Calu3 (cell line): ENCODE measurements at regions of chr12 and their contacts with region 1.

Region 1: GRCh38 chr12:104951759-104952509 is 6.2 kb downstream of the SLC41A2 start:
- DNase-seq: no peak
- H3K4me3 Mint-ChIP-seq: peak overlapping the region; percentile 55
- H3K27ac Mint-ChIP-seq: peak overlapping the region; percentile 82
- H3K4me1 Mint-ChIP-seq: peaks cover 48% of the 10 kb centered on the region
- H3K27me3 Mint-ChIP-seq: no peaks in the 10 kb centered on the region
- CTCF ChIP-seq: no peak

Region 2: DNA sequence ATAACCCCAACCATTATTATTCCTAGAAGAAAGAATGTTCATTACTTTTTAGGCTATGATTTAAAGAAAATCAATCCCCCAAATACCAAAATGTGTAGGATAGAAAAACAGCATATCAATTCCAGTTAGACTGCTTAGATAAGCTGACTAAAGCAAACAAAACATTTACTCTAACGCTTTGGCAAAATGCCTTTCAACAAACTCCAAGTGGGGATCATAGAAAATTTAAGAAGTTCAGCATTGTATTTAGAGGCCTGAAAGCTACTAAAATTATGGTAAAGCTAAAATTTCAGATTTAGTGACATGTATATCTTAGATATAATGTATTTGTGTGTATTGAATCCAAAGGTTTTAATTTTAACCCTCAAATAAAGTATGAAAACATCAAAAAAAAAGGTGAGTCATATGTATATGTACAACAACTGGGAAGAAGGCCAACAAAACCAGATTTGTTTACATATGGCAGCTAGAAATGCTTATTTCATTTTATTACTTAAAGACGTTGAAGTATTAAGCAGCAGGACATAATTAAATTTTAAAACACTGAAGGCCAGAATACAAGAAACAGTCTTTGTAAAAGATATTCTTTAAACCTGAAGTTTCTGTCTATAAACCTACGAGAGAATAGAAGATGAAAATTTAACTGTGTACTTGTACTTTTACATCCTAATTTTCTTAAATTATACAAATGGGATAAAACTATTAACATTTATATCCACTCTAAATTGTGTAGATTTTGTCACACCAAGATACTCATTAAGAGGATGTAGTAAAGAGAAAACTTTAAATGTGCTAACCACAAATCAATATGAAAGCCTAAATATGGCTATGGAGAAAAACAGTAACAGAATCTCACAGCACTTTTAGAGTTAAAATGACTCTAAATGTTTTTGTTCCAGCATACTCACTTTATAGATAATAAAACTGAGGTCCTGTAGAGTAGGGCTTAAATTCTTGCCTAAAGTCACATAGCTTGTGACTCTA is 65.2 kb before region 1 on chr12:
- CTCF ChIA-PET with region 1: no interaction called
- intact Hi-C with region 1: loop called (anchors 5 kb)
- DNase-seq: no peak
- H3K4me3 Mint-ChIP-seq: no peak overlapping the region
- H3K27ac Mint-ChIP-seq: no peak overlapping the region
- H3K4me1 Mint-ChIP-seq: peaks cover 10% of the 10 kb centered on the region
- H3K27me3 Mint-ChIP-seq: no peaks in the 10 kb centered on the region
- CTCF ChIP-seq: no peak

Region 3: DNA sequence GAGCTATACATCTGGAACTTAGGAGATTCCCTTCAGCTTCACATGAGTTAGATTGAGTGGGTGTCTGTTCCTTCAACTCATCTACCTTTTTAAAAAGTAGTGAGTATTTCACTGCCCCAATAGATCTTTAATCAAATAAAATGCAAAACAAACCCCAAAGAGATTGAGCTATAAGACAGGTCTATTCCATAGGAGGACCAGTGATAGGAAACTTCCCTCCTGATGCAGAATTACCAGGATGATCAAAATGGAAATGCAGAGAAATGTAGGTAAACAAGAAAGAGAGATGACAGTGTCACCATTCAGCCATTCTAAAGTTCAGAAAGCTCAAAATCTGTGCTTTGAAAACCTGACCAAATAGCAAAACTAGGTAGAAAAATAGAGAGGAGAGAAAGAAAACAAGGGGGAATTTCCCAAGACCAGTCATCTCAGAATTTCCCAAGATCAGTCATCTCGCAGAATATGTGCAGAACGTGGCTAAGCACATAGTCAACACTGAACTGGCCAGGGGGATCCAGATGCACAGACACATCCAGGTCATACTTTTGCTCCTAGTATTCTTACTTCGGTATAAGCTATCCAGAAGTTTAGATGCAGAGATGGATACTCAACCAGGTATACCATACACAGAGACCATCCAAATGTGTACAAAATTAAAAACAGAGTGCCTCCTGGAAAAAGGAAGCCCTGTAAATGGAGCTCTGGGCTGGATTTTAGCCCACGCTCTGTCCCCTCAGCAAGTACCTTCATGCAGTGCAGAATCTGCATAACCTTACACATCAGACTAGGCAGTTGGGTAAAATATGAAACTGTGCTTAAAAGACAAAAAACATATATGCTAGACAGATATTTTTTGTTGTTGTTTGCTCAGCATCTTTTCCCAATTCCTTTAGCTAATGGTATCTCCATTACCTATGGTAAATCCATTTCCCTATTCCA is 21.3 kb before region 1 on chr12:
- CTCF ChIA-PET with region 1: no interaction called
- intact Hi-C with region 1: no loop called
- DNase-seq: no peak
- H3K4me3 Mint-ChIP-seq: no peak overlapping the region
- H3K27ac Mint-ChIP-seq: no peak overlapping the region
- H3K4me1 Mint-ChIP-seq: peaks cover 30% of the 10 kb centered on the region
- H3K27me3 Mint-ChIP-seq: no peaks in the 10 kb centered on the region
- CTCF ChIP-seq: no peak